Sigmoid colon (tissue), 7 donors: ENCODE measurements at regions of chr14 and their contacts with region 1.

Region 1: DNA sequence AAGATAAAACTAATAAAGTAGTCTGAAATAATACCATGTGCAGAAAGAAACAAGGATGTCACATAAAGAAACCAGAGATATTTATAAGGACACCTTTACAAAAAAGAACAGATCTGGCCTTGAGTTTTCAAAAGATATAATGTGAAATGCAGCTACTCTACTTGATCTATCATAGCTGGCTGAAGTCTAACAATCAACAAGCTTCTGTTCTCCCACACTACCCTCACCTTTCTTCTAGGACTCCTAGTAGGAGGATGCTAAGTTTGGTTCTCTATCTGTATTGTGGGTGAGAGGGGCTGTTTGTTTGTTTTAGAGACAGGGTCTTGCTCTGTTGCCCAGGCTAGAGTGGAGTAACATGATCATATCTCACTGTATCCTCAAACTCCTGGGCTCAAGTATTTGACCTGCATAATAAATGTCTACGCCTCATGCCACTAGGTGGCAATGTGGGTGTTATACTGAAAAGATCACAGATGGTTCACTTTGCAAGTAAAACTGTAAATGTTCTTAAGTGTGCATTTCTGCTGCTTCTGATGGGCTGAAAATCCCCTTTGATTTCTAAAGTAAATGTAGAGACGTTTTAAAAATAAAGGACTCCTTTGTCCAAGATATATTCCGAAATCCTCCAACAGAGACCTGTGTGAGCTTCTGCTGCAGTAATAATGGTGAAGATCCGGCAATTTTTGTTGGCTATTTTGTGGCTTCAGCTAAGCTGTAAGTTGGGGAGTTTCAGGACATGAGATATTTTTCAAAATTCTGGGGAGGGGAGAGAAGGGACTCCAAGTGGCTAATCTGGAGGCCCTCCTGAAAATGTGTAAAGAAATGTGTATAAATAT is 269.3 kb downstream of the DAD1 start:
- DNase-seq: peak; percentile 72
- H3K4me3 ChIP-seq: no peak overlapping the region
- H3K27ac ChIP-seq: no peak overlapping the region
- H3K4me1 ChIP-seq: no peaks in the 10 kb centered on the region
- H3K27me3 ChIP-seq: no peaks in the 10 kb centered on the region
- CTCF ChIP-seq: peak; percentile 17 to 62 (median 54)
- EP300 ChIP-seq: no peak
- POLR2A ChIP-seq: no peak

Region 2: GRCh38 chr14:22375321-22375930 is 55.7 kb after region 1 on chr14:
- intact Hi-C with region 1: loop called (anchors 5 kb)
- DNase-seq: no peak
- H3K4me3 ChIP-seq: no peak overlapping the region
- H3K27ac ChIP-seq: no peak overlapping the region
- H3K4me1 ChIP-seq: peaks cover 0 to 21% (median 11%) of the 10 kb centered on the region in 4 donors
- H3K27me3 ChIP-seq: no peaks in the 10 kb centered on the region
- CTCF ChIP-seq: peak in 3 of 4 experiments; percentile 41 to 53 (median 45)
- EP300 ChIP-seq: no peak
- POLR2A ChIP-seq: no peak

Region 3: DNA sequence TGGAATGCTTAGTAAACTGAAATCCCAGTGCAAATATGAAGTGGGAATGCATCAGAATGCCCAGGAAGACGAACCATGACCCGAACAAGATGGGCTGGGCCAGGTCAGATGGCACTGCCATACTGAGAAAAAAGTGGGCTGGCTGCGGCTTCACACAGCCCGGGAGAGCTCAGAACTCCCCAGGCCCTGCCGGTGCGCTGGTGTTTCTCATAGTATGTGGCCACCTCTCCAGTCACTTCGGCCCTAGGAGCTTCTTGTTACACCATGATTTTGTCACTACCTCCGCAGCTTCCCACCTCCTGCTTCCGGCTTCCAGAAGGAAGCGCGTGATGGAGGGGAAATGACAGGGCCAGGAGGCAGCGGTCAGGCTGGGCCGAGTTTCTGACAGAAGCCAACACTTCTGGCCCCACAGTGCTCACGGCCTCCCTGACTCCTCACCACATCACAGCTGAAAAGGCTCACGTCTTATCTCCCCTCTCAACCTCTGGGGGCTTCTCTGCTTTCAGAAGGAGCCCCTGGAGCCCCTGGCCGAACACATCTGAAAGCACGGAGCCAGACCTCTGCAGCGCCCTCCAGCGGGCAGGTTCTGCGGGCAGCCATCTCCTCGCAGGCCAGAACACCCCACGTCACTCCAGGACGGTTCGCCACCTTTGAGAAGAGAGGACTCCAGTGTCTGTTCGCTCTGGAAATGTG is 238.6 kb after region 1 on chr14:
- intact Hi-C with region 1: no loop called
- DNase-seq: no peak
- H3K4me3 ChIP-seq: no peak overlapping the region
- H3K27ac ChIP-seq: no peak overlapping the region
- H3K4me1 ChIP-seq: peaks cover 0 to 34% (median 15%) of the 10 kb centered on the region in 4 donors
- H3K27me3 ChIP-seq: no peaks in the 10 kb centered on the region
- CTCF ChIP-seq: no peak
- EP300 ChIP-seq: no peak
- POLR2A ChIP-seq: no peak